Calu3 (cell line): ENCODE measurements at regions of chr4 and their contacts with region 1.

Region 1: GRCh38 chr4:140049024-140049848 is 104.7 kb downstream of the MAML3 start:
- DNase-seq: peak; percentile 26
- H3K4me3 Mint-ChIP-seq: peak overlapping the region; percentile 65
- H3K27ac Mint-ChIP-seq: peak overlapping the region; percentile 78
- H3K4me1 Mint-ChIP-seq: peaks cover 35% of the 10 kb centered on the region
- H3K27me3 Mint-ChIP-seq: no peaks in the 10 kb centered on the region
- CTCF ChIP-seq: no peak

Region 2: GRCh38 chr4:140018931-140019618 is 30.2 kb before region 1 on chr4:
- CTCF ChIA-PET with region 1: interaction called, 9 read pairs
- intact Hi-C with region 1: loop called (anchors 1 kb)
- DNase-seq: no peak
- H3K4me3 Mint-ChIP-seq: peak overlapping the region; percentile 53
- H3K27ac Mint-ChIP-seq: peak overlapping the region; percentile 87
- H3K4me1 Mint-ChIP-seq: peaks cover 45% of the 10 kb centered on the region
- H3K27me3 Mint-ChIP-seq: no peaks in the 10 kb centered on the region
- CTCF ChIP-seq: no peak

Region 3: DNA sequence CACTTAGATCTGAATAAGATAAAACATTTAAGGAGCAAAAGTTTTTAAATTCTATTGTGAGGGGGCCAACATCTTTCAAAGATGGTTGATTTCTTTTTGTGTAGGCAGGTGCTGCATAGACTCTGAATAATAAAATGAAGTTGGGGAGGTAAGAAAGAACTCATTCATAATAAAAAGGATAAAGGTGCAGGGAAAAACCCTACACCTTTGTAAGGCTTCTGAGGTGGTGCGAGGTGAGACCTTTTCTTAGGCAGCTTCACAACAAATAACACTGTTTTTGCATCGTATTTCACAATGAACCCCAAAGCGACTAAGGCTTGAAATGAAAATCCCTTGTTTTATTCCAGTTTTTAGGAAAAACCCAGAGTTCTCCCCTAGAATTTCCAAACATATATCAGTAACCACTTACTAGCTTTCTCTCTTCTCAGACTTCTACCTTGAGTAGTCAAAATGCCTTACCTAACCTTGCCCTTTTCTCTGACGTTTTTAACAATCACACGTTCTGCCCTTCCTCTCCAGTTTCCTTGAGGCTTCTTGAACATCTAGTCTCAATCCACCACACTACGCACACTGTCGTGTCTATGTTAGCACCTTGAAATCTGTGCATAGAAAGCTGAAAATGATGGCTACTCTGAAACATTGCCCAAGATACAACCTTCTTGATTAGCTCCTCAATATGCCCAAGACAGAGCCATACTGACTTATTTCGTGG is 74.6 kb after region 1 on chr4:
- CTCF ChIA-PET with region 1: no interaction called
- intact Hi-C with region 1: no loop called
- DNase-seq: no peak
- H3K4me3 Mint-ChIP-seq: no peak overlapping the region
- H3K27ac Mint-ChIP-seq: no peak overlapping the region
- H3K4me1 Mint-ChIP-seq: no peaks in the 10 kb centered on the region
- H3K27me3 Mint-ChIP-seq: no peaks in the 10 kb centered on the region
- CTCF ChIP-seq: no peak

Region 4: DNA sequence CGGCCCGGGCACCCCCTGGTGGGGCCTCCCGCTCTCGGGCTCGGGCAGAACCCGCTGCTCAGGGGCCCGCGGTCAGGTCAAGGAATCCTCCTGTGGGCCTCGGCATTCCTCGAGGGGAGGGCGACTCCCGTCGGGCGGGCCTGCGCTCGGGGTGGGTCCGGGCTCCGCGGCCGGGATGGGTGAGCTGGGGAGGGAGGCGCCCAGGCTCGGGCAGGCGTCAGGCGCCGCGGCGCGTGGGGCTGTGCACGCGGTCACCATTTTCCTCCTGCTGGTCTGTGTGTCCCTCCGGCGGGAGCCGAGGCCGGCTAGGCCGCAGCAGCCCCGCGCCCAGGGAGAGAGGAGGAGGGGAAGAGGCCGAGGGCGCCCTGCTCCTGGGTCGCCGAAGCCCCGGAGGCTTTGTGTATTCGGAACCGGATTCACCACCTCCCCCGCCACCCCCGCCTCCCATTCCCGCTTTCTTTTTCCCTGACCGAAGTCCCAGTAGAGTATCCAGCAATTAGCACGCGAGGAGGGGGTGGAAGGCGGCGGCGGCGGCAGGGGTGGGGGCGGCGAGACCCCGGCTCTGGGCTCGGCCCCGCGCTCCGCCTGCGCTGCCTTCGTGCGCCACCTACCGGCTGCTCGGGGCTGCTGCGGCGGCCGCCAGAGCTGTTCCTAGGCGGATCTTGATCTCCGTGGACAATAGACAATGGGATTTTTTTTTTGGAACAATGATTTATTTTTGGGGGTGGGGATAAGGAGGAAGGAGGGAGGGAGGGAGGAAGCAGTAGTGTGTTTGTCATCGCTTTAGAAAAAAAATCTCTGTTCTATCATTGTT is 203.7 kb after region 1 on chr4:
- CTCF ChIA-PET with region 1: interaction called, 6 read pairs
- intact Hi-C with region 1: loop called (anchors 2 kb)
- DNase-seq: peak; percentile 76
- H3K4me3 Mint-ChIP-seq: peak overlapping the region; percentile 45
- H3K27ac Mint-ChIP-seq: peak overlapping the region; percentile 11
- H3K4me1 Mint-ChIP-seq: peaks cover 29% of the 10 kb centered on the region
- H3K27me3 Mint-ChIP-seq: no peaks in the 10 kb centered on the region
- CTCF ChIP-seq: peak; percentile 87

Region 5: GRCh38 chr4:140271553-140271952 is 222.3 kb after region 1 on chr4:
- CTCF ChIA-PET with region 1: no interaction called
- intact Hi-C with region 1: no loop called
- DNase-seq: no peak
- H3K4me3 Mint-ChIP-seq: no peak overlapping the region
- H3K27ac Mint-ChIP-seq: no peak overlapping the region
- H3K4me1 Mint-ChIP-seq: peaks cover 16% of the 10 kb centered on the region
- H3K27me3 Mint-ChIP-seq: peaks cover 12% of the 10 kb centered on the region
- CTCF ChIP-seq: no peak